ENCODE measurements at regions of chrX and their contacts with region 1.

Region 1: GRCh38 chrX:106481341-106481740 is 130.4 kb upstream of the RADX start:
- DNase-seq: peak; percentile 36
- H3K4me3 ChIP-seq: no peak overlapping the region
- H3K27ac ChIP-seq: no peak overlapping the region
- H3K4me1 ChIP-seq: no peaks in the 10 kb centered on the region
- H3K27me3 ChIP-seq: no peaks in the 10 kb centered on the region
- CTCF ChIP-seq: peak; percentile 26 to 31
- POLR2A ChIP-seq: no peak

Region 2: GRCh38 chrX:106611679-106612392 is 130.5 kb after region 1 on chrX and contains the start of gene RADX:
- CTCF ChIA-PET with region 1: no interaction called
- POLR2A ChIA-PET with region 1: no interaction called
- dilution Hi-C with region 1: no loop called
- intact Hi-C with region 1: loop called (anchors 10 kb)
- DNase-seq: peak; percentile 43
- H3K4me3 ChIP-seq: peak within 1 kb of the TSS; percentile 25 to 41 (median 30)
- H3K27ac ChIP-seq: no peak within 1 kb of the TSS
- H3K4me1 ChIP-seq: peaks cover 3% of the 10 kb centered on the region
- H3K27me3 ChIP-seq: peaks cover 2 to 10% of the 10 kb centered on the region in 2 experiments
- CTCF ChIP-seq: no peak
- POLR2A ChIP-seq: no peak
- total RNA-seq, gene RADX: 0.09 TPM in 1 of 2 replicates, not detected in the other

Region 3: GRCh38 chrX:106718709-106719108 is 237.4 kb after region 1 on chrX:
- CTCF ChIA-PET with region 1: no interaction called
- POLR2A ChIA-PET with region 1: no interaction called
- dilution Hi-C with region 1: no loop called
- intact Hi-C with region 1: no loop called
- DNase-seq: no peak
- H3K4me3 ChIP-seq: no peak overlapping the region
- H3K27ac ChIP-seq: no peak overlapping the region
- H3K4me1 ChIP-seq: no peaks in the 10 kb centered on the region
- H3K27me3 ChIP-seq: no peaks in the 10 kb centered on the region
- CTCF ChIP-seq: no peak
- POLR2A ChIP-seq: no peak

Region 4: GRCh38 chrX:106791495-106791894 is 310.2 kb after region 1 on chrX:
- CTCF ChIA-PET with region 1: interaction called, 3 read pairs
- POLR2A ChIA-PET with region 1: no interaction called
- dilution Hi-C with region 1: no loop called
- intact Hi-C with region 1: loop called (anchors 10 kb)
- DNase-seq: peak; percentile 2
- H3K4me3 ChIP-seq: no peak overlapping the region
- H3K27ac ChIP-seq: no peak overlapping the region
- H3K4me1 ChIP-seq: no peaks in the 10 kb centered on the region
- H3K27me3 ChIP-seq: peaks cover 0 to 1% of the 10 kb centered on the region in 2 experiments
- CTCF ChIP-seq: no peak
- POLR2A ChIP-seq: no peak

Measured in endothelial cell of umbilical vein (primary cell).